Left ventricle myocardium superior (tissue), 1 donor: ENCODE measurements at regions of chr4 and their contacts with region 1.

Region 1: DNA sequence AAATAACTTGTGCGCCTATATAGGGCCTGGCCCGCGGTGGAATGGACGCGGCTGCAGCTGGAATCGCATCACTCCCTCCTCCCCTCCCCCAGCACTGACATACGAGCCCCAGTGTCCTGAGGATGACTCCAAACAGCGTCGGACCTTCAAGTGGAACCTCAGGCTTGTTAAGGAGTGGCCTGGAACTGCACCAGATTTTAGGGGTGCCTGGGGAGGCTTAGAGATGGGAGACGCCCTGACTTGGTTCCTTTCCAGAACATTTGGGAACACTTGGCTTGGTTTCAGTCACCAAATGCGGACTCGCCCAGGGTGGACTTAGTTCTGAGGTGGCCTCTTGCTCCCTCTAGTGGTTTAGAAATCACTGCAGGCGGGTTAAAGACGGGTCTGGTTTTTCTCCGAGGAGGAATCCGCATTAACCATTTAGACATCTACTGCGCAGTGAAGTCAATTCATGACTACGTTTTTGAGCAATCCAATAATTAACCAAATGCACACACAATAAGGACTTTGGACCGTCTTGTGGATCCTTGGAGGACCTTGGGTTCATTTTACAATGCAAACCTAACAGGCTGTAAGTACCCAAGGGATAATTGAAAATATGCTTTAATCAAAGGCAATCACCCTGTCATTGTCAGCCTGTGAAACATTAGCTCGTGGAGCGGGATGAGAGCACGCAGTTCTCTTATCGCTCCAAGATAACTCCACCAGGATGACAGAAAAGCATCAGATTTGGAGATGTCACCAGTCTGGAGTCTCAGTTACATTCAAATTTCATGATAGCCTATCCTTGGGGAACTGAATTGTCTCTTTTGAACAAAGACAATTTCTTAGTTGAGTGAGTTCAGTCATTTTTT is 11.2 kb upstream of the PDGFRA start:
- DNase-seq: peak; percentile 77
- ATAC-seq: peak; percentile 94

Region 2: GRCh38 chr4:53196882-53197771 is 1020.7 kb before region 1 on chr4:
- intact Hi-C with region 1: loop called (anchors 10 kb)
- DNase-seq: no peak
- ATAC-seq: peak; percentile 68

Region 3: DNA sequence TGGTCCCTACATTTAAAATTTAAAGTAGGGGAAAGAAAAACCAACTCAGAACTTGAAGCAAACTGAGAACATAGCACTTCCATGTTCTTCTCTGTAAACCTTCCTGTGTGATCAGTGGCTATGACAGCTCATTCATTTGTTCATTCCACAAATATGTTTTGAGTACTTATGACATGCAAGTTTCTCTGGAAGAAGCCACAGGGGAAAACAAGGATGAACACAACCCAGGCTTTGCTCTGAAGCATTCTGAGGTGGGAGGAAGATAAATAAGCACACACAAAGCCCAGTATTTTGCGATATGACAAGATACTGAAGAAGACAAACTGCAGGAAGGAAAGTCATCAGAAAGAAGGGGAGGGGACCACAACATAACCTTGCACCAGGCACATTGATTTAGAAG is 249.9 kb before region 1 on chr4:
- intact Hi-C with region 1: no loop called
- DNase-seq: no peak
- ATAC-seq: no peak